ENCODE measurements at regions of chr3 and their contacts with region 1.

Region 1: GRCh38 chr3:191412759-191413158 is 48.2 kb upstream of the PYDC2 start:
- DNase-seq: peak; percentile 77
- H3K4me3 Mint-ChIP-seq: no peak overlapping the region
- H3K27ac Mint-ChIP-seq: peak overlapping the region; percentile 57
- H3K4me1 Mint-ChIP-seq: peaks cover 12% of the 10 kb centered on the region
- H3K27me3 Mint-ChIP-seq: no peaks in the 10 kb centered on the region
- CTCF ChIP-seq: no peak

Region 2: DNA sequence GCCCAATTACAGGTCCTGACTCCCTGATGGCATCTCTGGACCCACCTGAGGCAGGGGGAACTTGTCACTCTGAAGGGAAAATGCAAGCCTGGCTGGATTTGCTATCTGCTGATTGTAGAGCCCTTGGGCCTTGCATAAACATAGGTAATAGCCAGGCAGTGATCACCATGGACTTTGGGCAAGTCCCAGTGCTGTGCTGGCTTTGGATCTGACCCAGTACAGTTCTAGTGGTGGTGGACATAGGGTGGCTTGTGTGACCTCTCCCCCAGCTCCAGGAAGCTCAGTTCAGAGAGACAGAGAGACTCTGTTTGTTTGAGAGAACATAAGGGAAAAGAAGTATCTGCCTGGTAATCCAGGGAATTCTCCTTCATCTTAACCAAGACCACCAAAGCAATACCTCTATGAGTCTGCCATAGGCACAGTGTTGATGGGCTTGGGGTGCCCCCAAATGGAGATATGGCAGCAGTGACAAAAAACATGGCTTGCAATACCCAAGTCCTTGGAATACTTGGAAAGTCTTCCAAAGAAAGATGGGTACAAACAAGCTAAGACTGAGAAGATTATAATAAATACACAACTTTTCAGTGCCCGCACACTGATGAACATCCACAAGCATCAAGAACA is 396.7 kb after region 1 on chr3:
- CTCF ChIA-PET with region 1: interaction called, 3 read pairs
- POLR2A ChIA-PET with region 1: no interaction called
- intact Hi-C with region 1: loop called (anchors 1 kb)
- DNase-seq: peak; percentile 20
- H3K4me3 Mint-ChIP-seq: no peak overlapping the region
- H3K27ac Mint-ChIP-seq: no peak overlapping the region
- H3K4me1 Mint-ChIP-seq: no peaks in the 10 kb centered on the region
- H3K27me3 Mint-ChIP-seq: no peaks in the 10 kb centered on the region
- CTCF ChIP-seq: peak; percentile 21

Region 3: DNA sequence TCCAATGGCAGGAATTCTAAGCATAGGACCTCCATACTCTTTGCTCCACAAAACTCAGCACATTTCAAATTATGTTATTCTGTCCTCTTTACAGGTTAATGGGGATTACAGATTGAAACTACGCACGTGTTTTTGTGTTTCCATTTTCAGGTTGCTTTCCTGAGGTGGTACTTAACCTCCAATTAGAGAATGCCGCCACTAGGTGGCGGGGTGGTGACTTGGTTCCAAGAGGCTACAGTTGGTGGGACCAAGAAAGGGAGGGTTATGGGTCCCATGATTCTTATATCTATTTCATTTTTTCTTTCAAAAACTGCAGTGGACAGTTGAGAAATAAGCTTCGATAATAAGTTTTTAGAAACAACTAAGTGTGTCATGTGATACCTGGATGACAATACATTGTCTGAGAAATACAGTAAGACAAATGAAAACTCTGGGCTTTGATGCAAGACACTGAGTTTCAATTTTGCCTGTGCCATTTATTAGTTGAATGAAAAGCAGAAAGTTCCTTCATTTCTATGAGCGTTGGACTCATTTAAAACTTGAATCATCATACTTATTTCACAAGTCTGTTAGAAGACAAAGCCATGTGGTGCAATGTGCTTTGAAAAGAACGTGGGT is 775.6 kb after region 1 on chr3:
- CTCF ChIA-PET with region 1: no interaction called
- POLR2A ChIA-PET with region 1: no interaction called
- intact Hi-C with region 1: loop called (anchors 10 kb)
- DNase-seq: peak; percentile 71
- H3K4me3 Mint-ChIP-seq: no peak overlapping the region
- H3K27ac Mint-ChIP-seq: no peak overlapping the region
- H3K4me1 Mint-ChIP-seq: peaks cover 6% of the 10 kb centered on the region
- H3K27me3 Mint-ChIP-seq: no peaks in the 10 kb centered on the region
- CTCF ChIP-seq: peak; percentile 68

Region 4: DNA sequence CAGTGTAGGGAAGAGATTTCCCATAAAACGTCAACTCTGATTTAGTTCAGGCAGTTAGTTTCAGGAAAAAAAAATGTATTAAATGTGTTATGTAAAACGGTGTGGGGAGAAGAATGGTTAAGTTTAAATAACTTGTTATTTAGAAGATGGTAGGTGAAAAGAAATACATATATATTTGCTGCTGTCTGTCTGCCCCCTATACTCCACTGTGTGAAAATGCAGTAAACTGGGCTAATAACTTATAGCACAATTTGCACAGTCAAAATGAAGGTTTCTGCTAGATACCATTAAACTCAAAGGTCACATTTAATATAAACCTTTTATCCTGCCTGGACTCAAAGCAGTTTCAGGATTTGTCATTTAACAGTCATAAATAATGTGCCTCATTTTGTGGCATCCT is 799.6 kb after region 1 on chr3:
- CTCF ChIA-PET with region 1: no interaction called
- POLR2A ChIA-PET with region 1: no interaction called
- intact Hi-C with region 1: loop called (anchors 1 kb)
- DNase-seq: no peak
- H3K4me3 Mint-ChIP-seq: no peak overlapping the region
- H3K27ac Mint-ChIP-seq: no peak overlapping the region
- H3K4me1 Mint-ChIP-seq: peaks cover 4% of the 10 kb centered on the region
- H3K27me3 Mint-ChIP-seq: no peaks in the 10 kb centered on the region
- CTCF ChIP-seq: no peak

Region 5: GRCh38 chr3:192303235-192303634 is 890.5 kb after region 1 on chr3:
- CTCF ChIA-PET with region 1: no interaction called
- POLR2A ChIA-PET with region 1: no interaction called
- intact Hi-C with region 1: no loop called
- DNase-seq: no peak
- H3K4me3 Mint-ChIP-seq: no peak overlapping the region
- H3K27ac Mint-ChIP-seq: no peak overlapping the region
- H3K4me1 Mint-ChIP-seq: no peaks in the 10 kb centered on the region
- H3K27me3 Mint-ChIP-seq: peaks cover 72% of the 10 kb centered on the region
- CTCF ChIP-seq: no peak

Region 6: DNA sequence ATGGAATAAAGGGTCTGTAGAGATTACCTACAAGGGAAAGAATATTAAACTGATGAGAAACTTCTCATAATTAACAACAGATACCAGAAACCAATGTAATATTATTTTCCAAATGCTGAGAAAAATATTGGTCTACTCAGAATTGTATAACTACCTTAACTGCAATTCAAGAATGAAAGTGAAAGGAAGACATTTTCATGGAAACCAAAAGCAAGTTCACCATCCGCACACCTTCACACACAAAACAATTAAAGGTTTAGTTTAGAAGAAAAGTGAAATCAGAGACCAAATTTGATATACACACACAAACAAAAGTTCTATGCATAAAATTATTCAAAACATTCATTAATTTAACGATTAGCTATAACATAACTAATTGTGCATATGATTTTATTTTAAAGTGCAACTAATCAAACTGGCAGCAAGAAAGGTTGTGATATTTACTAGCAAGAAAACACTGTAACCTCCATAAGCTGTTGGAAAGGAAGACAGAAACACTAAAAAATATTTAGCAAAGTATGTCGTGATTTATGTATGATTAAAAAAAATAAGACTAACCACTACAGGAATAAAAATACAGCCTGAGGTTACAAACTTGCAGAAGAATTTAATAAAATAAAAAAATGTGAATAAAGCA is 919.1 kb after region 1 on chr3:
- CTCF ChIA-PET with region 1: no interaction called
- POLR2A ChIA-PET with region 1: no interaction called
- intact Hi-C with region 1: loop called (anchors 10 kb)
- DNase-seq: no peak
- H3K4me3 Mint-ChIP-seq: peak overlapping the region; percentile 24
- H3K27ac Mint-ChIP-seq: no peak overlapping the region
- H3K4me1 Mint-ChIP-seq: no peaks in the 10 kb centered on the region
- H3K27me3 Mint-ChIP-seq: peaks cover 71% of the 10 kb centered on the region
- CTCF ChIP-seq: no peak

Measured in MCF 10A (cell line).